CD4-positive, alpha-beta memory T cell (primary cell): ENCODE measurements at regions of chr14 and their contacts with region 1.

Region 1: DNA sequence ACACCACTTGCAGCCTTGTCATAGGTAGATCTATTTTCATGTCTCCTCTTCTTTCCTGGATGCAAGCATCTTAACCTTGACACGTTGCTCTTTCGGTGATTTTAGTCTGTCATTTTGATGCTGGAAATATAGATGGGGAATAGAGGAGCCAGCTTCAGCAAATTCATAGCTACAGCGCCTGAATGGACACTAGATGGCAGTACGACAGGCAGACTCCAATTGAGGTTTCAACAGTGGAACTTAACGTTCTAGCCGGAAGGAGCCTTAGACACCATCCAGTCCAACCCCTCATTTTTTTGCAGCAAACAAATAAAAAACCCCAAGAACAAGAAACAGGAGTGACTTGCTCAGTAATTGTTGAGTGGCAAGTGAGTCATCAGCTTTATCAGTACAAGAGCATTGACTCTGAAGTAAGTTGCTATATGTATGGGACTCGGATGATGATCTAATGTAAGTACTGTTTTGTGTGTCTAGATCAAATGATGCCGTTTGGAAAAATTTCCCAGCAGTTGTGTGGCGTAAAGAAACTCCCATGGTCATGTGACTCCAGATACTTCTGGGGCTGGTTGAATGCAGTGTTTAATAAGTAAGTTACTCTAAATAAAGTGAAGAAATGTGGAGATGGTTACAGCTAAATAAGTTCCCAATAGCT is 9.0 kb downstream of the DMAC2L start:
- DNase-seq: peak; percentile 80 to 89 (median 84)
- H3K4me3 ChIP-seq: no peak overlapping the region
- H3K4me3 Mint-ChIP-seq: no peak overlapping the region
- H3K27ac ChIP-seq: peak overlapping the region; percentile 56
- H3K27ac Mint-ChIP-seq: no peak overlapping the region
- H3K4me1 ChIP-seq: peaks cover 17% of the 10 kb centered on the region
- H3K4me1 Mint-ChIP-seq: peaks cover 4 to 20% (median 17%) of the 10 kb centered on the region in 4 donors
- H3K27me3 ChIP-seq: no peaks in the 10 kb centered on the region
- H3K27me3 Mint-ChIP-seq: no peaks in the 10 kb centered on the region

Region 2: GRCh38 chr14:50156111-50156510 is 165.0 kb before region 1 on chr14:
- CTCF ChIA-PET with region 1: no interaction called
- POLR2A ChIA-PET with region 1: no interaction called
- intact Hi-C with region 1: no loop called
- DNase-seq: no peak
- H3K4me3 ChIP-seq: no peak overlapping the region
- H3K4me3 Mint-ChIP-seq: no peak overlapping the region
- H3K27ac ChIP-seq: no peak overlapping the region
- H3K27ac Mint-ChIP-seq: no peak overlapping the region
- H3K4me1 ChIP-seq: no peaks in the 10 kb centered on the region
- H3K4me1 Mint-ChIP-seq: peaks cover 0 to 2% (median 0%) of the 10 kb centered on the region in 4 donors
- H3K27me3 ChIP-seq: no peaks in the 10 kb centered on the region
- H3K27me3 Mint-ChIP-seq: no peaks in the 10 kb centered on the region

Region 3: DNA sequence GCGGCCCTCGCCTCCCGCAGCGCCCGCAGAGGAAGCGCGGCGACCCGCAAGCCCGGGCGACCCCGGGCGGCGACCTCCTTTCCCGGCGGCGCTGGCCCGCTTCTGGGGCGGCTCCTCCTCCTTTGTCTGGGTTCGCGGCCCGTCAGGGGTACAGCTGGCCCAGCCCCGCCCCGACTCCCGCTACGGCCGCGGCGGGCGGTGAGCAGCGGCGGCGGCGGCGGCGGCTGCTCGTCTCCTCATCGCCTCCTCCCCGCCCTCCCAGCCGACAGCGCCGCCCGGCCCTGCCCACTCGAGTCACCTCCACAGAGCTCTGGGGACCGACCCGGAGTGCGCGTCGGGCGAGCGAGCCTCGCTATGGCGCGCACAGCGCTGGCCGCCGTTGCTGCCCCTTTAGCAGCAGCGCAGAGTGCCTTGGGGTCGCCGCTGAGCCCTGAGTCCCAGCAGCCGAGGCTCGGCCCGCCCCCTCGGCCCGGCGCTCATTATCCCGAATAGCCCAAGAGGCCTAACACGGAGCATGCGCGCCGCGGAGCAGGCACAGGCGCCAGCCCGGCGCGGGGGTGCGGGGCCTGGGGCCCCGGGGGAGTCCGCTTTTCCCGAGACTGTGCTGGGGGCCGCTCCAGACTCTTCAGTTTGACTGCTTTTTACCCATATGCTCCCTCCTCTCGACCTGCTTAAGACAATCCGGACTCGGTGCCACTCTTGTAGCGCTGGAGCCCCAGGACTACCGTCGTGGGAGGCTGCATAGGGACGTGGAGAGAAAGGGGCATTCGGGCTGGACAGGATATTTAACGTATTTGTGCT is 89.5 kb before region 1 on chr14 and contains the start of gene SOS2:
- CTCF ChIA-PET with region 1: no interaction called
- POLR2A ChIA-PET with region 1: no interaction called
- intact Hi-C with region 1: loop called (anchors 2 kb)
- DNase-seq: peak; percentile 83 to 89 (median 83)
- H3K4me3 ChIP-seq: peak within 1 kb of the TSS; percentile 50 to 81
- H3K4me3 Mint-ChIP-seq: peak within 1 kb of the TSS; percentile 86 to 97 (median 90)
- H3K27ac ChIP-seq: peak within 1 kb of the TSS; percentile 81
- H3K27ac Mint-ChIP-seq: peak within 1 kb of the TSS; percentile 90 to 98 (median 95)
- H3K4me1 ChIP-seq: peaks cover 48% of the 10 kb centered on the region
- H3K4me1 Mint-ChIP-seq: peaks cover 27 to 56% (median 38%) of the 10 kb centered on the region in 4 donors
- H3K27me3 ChIP-seq: no peaks in the 10 kb centered on the region
- H3K27me3 Mint-ChIP-seq: no peaks in the 10 kb centered on the region
- total RNA-seq, gene SOS2: 42.1 to 43.4 TPM

Region 4: DNA sequence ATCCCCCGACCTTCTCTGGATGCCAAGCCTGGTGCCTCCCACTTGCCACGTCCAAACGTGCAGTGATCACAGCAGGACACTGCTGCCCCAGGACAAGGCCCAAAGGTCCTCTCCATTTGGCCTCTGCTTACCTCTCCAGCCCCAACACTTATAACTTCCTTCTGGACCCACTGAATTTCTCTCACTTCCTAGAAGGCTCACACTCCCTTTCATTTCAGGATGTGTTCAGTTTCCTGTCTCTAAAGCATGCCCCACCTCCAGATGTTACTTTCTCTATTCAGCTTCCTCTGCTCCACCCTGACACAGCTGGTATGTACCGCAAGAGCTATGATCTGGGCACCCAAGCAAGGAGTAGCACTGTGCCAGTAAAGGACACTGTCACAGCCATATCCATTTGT is 42.6 kb after region 1 on chr14:
- CTCF ChIA-PET with region 1: interaction called, 29 read pairs
- POLR2A ChIA-PET with region 1: interaction called, 13 read pairs
- intact Hi-C with region 1: loop called (anchors 2 kb)
- DNase-seq: peak; percentile 61 to 77 (median 73)
- H3K4me3 ChIP-seq: peak overlapping the region; percentile 64 to 79
- H3K4me3 Mint-ChIP-seq: peak overlapping the region; percentile 84 to 97 (median 90)
- H3K27ac ChIP-seq: peak overlapping the region; percentile 73
- H3K27ac Mint-ChIP-seq: peak overlapping the region; percentile 83 to 97 (median 93)
- H3K4me1 ChIP-seq: peaks cover 17% of the 10 kb centered on the region
- H3K4me1 Mint-ChIP-seq: peaks cover 28 to 33% (median 30%) of the 10 kb centered on the region in 4 donors
- H3K27me3 ChIP-seq: no peaks in the 10 kb centered on the region
- H3K27me3 Mint-ChIP-seq: no peaks in the 10 kb centered on the region

Region 5: DNA sequence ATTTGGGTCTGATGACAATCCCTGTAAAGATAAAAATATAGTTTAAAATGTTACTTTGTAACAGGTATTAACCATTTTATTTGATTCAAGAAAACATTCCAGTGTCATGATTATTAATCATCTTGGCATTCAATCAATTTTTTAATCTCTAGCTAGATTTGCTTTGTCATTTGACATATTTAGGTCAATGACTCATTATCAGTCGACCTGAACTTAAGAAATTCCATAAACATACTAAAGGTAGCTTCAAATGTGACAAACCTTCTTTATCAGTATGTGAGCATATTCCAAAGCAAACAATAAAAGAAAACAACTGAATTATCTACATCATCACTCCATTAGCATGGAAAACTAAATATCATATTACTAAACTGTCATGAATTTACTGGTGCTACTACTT is 126.3 kb after region 1 on chr14:
- CTCF ChIA-PET with region 1: interaction called, 3 read pairs
- POLR2A ChIA-PET with region 1: no interaction called
- intact Hi-C with region 1: loop called (anchors 10 kb)
- DNase-seq: no peak
- H3K4me3 ChIP-seq: no peak overlapping the region
- H3K4me3 Mint-ChIP-seq: no peak overlapping the region
- H3K27ac ChIP-seq: no peak overlapping the region
- H3K27ac Mint-ChIP-seq: no peak overlapping the region
- H3K4me1 ChIP-seq: no peaks in the 10 kb centered on the region
- H3K4me1 Mint-ChIP-seq: no peaks in the 10 kb centered on the region
- H3K27me3 ChIP-seq: no peaks in the 10 kb centered on the region
- H3K27me3 Mint-ChIP-seq: no peaks in the 10 kb centered on the region

Region 6: DNA sequence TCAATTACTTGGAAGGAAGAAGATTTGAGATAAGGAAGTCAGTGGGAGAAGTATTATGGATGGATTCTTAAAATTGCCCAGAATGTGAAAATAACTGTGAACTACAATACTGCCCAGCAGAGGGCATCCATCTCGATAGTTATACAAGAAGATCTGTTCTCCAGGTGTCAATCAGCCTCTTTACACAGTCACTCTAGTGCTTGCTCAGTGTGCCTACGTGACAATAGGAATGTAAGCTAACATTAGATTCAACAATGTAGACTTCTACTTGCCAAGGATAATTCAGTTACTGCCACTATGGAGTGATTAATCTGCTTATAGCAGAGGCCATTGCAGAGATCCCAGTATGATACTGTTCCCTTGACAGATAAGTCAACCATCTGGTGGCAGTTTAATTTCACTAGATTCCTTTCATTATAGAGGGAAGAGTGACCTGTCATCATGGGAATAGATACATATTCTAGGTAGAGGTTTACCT is 221.8 kb after region 1 on chr14:
- CTCF ChIA-PET with region 1: interaction called, 11 read pairs
- POLR2A ChIA-PET with region 1: no interaction called
- intact Hi-C with region 1: no loop called
- DNase-seq: peak; percentile 43 to 52 (median 49)
- H3K4me3 ChIP-seq: no peak overlapping the region
- H3K4me3 Mint-ChIP-seq: no peak overlapping the region
- H3K27ac ChIP-seq: no peak overlapping the region
- H3K27ac Mint-ChIP-seq: no peak overlapping the region
- H3K4me1 ChIP-seq: peaks cover 7% of the 10 kb centered on the region
- H3K4me1 Mint-ChIP-seq: peaks cover 9 to 15% (median 12%) of the 10 kb centered on the region in 4 donors
- H3K27me3 ChIP-seq: no peaks in the 10 kb centered on the region
- H3K27me3 Mint-ChIP-seq: peaks cover 2 to 8% of the 10 kb centered on the region in 2 donors